ENCODE measurements at regions of chr16 and their contacts with region 1.

Region 1: GRCh38 chr16:89490387-89491237 is at the start of gene ANKRD11:
- DNase-seq: peak; percentile 99
- H3K4me3 Mint-ChIP-seq: peak within 1 kb of the TSS; percentile 84
- H3K27ac Mint-ChIP-seq: peak within 1 kb of the TSS; percentile 93
- H3K4me1 Mint-ChIP-seq: peaks cover 48% of the 10 kb centered on the region
- H3K27me3 Mint-ChIP-seq: no peaks in the 10 kb centered on the region
- total RNA-seq, gene ANKRD11: 126 to 133 TPM

Region 2: GRCh38 chr16:89241187-89242007 is 249.2 kb before region 1 on chr16:
- CTCF ChIA-PET with region 1: no interaction called
- POLR2A ChIA-PET with region 1: interaction called, 3 read pairs
- intact Hi-C with region 1: loop called (anchors 5 kb)
- DNase-seq: peak; percentile 86
- H3K4me3 Mint-ChIP-seq: peak overlapping the region; percentile 97
- H3K27ac Mint-ChIP-seq: peak overlapping the region; percentile 96
- H3K4me1 Mint-ChIP-seq: peaks cover 4% of the 10 kb centered on the region
- H3K27me3 Mint-ChIP-seq: no peaks in the 10 kb centered on the region

Region 3: GRCh38 chr16:89325861-89326471 is 164.6 kb before region 1 on chr16:
- CTCF ChIA-PET with region 1: no interaction called
- POLR2A ChIA-PET with region 1: interaction called, 6 read pairs
- intact Hi-C with region 1: loop called (anchors 2 kb)
- DNase-seq: peak; percentile 48
- H3K4me3 Mint-ChIP-seq: no peak overlapping the region
- H3K27ac Mint-ChIP-seq: peak overlapping the region; percentile 46
- H3K4me1 Mint-ChIP-seq: peaks cover 87% of the 10 kb centered on the region
- H3K27me3 Mint-ChIP-seq: no peaks in the 10 kb centered on the region

Region 4: GRCh38 chr16:89409161-89409711 is 81.4 kb before region 1 on chr16:
- CTCF ChIA-PET with region 1: no interaction called
- POLR2A ChIA-PET with region 1: interaction called, 4 read pairs
- intact Hi-C with region 1: loop called (anchors 2 kb)
- DNase-seq: peak; percentile 78
- H3K4me3 Mint-ChIP-seq: no peak overlapping the region
- H3K27ac Mint-ChIP-seq: peak overlapping the region; percentile 86
- H3K4me1 Mint-ChIP-seq: peaks cover 88% of the 10 kb centered on the region
- H3K27me3 Mint-ChIP-seq: no peaks in the 10 kb centered on the region

Region 5: GRCh38 chr16:89507834-89508590 is 17.4 kb after region 1 on chr16 and contains the start of gene SPG7:
- CTCF ChIA-PET with region 1: interaction called, 5 read pairs
- POLR2A ChIA-PET with region 1: interaction called, 32 read pairs
- intact Hi-C with region 1: loop called (anchors 1 kb)
- DNase-seq: peak; percentile 93
- H3K4me3 Mint-ChIP-seq: peak within 1 kb of the TSS; percentile 94
- H3K27ac Mint-ChIP-seq: peak within 1 kb of the TSS; percentile 94
- H3K4me1 Mint-ChIP-seq: peaks cover 25% of the 10 kb centered on the region
- H3K27me3 Mint-ChIP-seq: no peaks in the 10 kb centered on the region
- total RNA-seq, gene SPG7: 67.9 to 70.4 TPM

Region 6: DNA sequence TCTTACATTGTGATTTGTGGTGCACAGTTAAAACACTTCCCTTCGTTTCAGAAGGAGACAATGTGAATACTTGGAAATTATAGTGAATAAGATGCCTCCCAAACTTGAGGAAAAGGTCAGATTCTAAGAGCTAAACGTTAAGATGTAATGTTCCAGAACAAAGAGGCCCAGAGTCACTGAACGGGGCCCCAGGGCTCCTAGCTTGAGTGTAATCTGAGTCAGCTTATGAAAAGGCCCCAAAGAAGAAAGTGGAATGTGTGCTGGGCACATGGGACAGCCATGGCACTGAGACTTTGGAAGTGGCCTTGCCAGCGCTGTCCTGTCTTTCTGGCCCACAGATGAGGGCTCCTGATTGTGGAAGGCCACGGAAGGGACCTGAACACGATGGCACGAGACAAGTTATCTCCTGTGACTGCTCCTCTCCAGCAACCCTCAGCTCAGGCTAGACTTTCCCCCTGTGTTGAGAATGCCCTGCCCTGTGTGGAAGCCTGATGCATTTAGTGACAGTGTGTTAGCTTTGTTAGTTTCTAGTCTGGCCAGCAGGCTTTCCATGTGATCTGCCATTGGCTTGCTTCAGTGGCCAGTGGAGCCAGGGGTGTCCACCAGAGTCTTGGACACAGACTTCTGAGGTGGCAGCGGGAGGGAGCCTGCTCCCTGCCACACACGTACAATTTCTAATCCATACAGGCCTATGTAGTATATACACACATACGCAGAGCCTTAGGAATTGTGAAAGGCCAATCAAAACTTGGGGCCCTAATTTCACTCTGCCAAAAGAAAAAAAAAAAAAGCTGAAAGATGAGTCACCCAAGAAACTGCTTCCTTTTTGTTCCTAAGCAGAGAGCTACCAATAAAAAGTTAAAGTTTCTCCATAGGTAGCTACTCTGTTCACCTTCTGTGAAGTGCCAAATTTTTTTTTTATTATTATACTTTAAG is 180.2 kb after region 1 on chr16:
- CTCF ChIA-PET with region 1: no interaction called
- POLR2A ChIA-PET with region 1: no interaction called
- intact Hi-C with region 1: no loop called
- DNase-seq: no peak
- H3K4me3 Mint-ChIP-seq: no peak overlapping the region
- H3K27ac Mint-ChIP-seq: no peak overlapping the region
- H3K4me1 Mint-ChIP-seq: peaks cover 11% of the 10 kb centered on the region
- H3K27me3 Mint-ChIP-seq: no peaks in the 10 kb centered on the region